Dorsolateral prefrontal cortex (tissue), 120 donors: ENCODE measurements at regions of chr4 and their contacts with region 1.

Region 1: DNA sequence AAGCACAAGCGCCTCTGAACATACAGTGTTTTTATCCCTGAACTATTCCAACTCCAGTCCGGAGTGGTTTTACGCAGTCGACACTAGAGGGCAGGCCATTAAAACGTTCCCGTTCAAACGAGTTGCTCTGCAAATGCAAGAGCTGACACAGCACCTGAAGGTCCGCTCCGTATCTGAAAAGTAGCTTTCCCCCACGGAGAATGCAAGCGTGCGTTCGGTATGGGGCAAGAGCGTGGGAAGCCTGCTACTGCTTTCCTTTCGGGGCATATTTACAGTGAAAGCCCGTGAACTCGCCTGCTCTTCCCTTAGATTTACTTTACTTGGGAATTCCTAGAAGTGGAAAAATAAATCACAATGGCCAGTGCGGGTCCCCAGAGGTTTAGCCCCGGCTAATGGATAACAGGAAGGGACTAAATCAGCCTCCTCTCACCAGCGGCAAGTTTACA is 190.8 kb downstream of the TSPAN5 start:
- DNase-seq: peak; percentile 39 to 86 (median 80)
- H3K4me3 ChIP-seq: peak overlapping the region in 58 of 59 donors; percentile 2 to 70 (median 51)
- H3K27ac ChIP-seq: peak overlapping the region in 42 of 59 donors; percentile 6 to 85 (median 66)
- H3K27me3 ChIP-seq: no peaks in the 10 kb centered on the region
- CTCF ChIP-seq: peak; percentile 54 to 94 (median 84)

Region 2: DNA sequence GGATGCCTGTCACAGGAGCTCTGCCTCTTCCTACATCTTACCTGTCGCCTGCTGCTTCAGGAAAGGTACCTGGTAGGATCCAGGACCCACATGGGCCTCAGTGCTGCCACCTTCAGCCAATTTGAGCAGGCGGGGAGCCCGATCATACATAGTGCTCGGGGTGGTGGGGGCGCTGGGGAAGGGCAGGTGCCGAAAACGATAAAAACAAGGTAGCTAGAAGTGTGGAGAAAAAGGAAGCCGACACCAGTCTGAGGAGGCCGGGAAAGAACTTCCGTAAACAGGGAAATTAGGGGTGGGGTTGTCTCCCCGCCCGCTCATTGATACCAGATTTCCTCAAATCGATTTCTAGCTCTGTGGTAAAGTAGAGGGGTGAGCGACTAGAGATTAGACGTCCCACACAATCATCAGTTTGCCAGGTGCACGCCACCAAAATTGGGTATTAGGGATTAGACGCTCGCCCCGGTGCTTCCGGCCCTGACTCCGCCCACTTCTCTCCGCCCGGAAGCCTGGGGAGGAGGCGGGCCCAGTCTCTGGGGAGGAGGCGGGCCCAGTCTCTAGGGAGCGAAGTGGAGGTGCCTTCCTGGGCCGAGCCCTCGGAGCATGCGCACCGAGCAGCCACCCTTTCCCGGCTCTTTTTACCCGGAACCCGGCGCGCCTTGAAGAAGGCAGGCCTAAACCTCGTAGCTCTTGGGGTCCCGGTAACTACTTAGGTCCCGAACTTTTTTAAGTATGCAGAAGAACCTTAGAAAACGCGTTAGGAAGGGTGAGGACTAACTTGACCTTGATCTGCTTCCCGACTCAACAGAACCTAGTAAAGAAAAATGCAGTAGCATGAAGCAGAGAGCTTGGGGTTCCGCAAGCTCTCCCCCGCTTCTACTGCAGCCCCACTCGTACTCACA is 324.4 kb before region 1 on chr4 and contains the start of gene STPG2:
- intact Hi-C with region 1: loop called in 1 of 2 experiments (anchors 10 kb)
- DNase-seq: peak; percentile 77 to 96 (median 92)
- H3K4me3 ChIP-seq: peak within 1 kb of the TSS; percentile 57 to 95 (median 77)
- H3K27ac ChIP-seq: peak within 1 kb of the TSS; percentile 59 to 96 (median 90)
- H3K27me3 ChIP-seq: no peaks in the 10 kb centered on the region
- CTCF ChIP-seq: peak in 54 of 56 donors; percentile 12 to 66 (median 49)
- total RNA-seq, gene STPG2: 0.65 to 5.0 (median 2.1) TPM in 119 of 120 experiments, not detected in the other

Region 3: GRCh38 chr4:98566361-98567008 is 98.8 kb after region 1 on chr4:
- intact Hi-C with region 1: loop called in 1 of 2 experiments (anchors 2 kb)
- DNase-seq: peak in 9 of 10 donors; percentile 53 to 87 (median 84)
- H3K4me3 ChIP-seq: peak overlapping the region in 41 of 59 donors; percentile 1 to 52 (median 23)
- H3K27ac ChIP-seq: peak overlapping the region; percentile 86 to 99 (median 95)
- H3K27me3 ChIP-seq: no peaks in the 10 kb centered on the region
- CTCF ChIP-seq: peak in 8 of 56 donors; percentile 5 to 36 (median 14)

Region 4: GRCh38 chr4:98658287-98659105 is 190.8 kb after region 1 on chr4 and contains the start of gene TSPAN5:
- intact Hi-C with region 1: loop called (anchors 2 kb)
- DNase-seq: peak; percentile 56 to 90 (median 76)
- H3K4me3 ChIP-seq: peak within 1 kb of the TSS; percentile 59 to 96 (median 86)
- H3K27ac ChIP-seq: peak within 1 kb of the TSS; percentile 78 to 98 (median 94)
- H3K27me3 ChIP-seq: no peaks in the 10 kb centered on the region
- CTCF ChIP-seq: peak in 12 of 56 donors; percentile 3 to 35 (median 10)
- total RNA-seq, gene TSPAN5: 56.5 to 140 (median 109) TPM

Region 5: GRCh38 chr4:99054428-99054994 is 586.9 kb after region 1 on chr4:
- intact Hi-C with region 1: loop called in 1 of 2 experiments (anchors 2 kb)
- DNase-seq: no peak
- H3K4me3 ChIP-seq: no peak overlapping the region
- H3K27ac ChIP-seq: peak overlapping the region in 6 of 59 donors; percentile 4 to 42 (median 22)
- H3K27me3 ChIP-seq: no peaks in the 10 kb centered on the region
- CTCF ChIP-seq: no peak